CD14-positive monocyte (primary cell): ENCODE measurements at regions of chr15 and their contacts with region 1.

Region 1: DNA sequence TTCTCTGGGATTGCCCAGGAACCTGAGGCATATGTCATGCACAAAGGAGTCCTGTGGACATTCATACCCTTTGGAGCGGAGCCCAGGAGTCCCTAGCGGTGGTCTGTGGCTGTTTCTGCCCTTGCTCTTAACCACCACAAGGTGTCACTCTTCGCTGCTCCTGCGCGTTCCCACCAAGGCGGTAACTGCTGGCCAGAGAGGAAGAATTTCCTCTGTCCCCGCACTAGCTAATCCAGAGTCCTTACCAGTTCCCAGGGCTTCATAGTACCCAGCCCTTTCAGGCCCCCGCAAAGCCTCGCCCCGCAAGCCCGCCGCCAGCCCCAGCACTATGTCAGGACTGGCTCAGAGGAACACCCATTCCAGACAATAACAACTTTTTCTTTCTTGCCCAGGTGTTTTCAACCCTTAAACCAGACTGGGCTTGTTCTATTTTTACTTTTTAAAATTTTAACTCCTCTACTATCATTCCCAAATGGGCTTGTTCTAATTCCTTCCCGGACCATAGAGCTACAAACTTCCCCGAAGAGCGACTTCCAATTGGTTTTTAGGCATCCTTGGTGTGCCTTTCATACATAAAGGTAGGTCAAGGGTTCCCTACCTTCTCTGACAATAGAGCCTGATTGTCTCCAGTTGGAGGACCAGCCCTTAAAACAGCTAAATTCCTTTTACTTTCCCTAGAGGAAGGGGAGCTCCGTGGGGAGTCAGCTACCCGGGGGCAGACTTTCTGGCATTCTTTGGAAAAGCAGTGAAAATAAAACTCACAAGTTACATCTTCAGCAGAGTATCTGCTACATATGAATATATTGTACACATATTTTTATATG is 31.8 kb upstream of the ZNF774 start:
- DNase-seq: peak; percentile 76 to 84 (median 84)
- H3K4me3 ChIP-seq: peak overlapping the region in 1 of 3 experiments; percentile 30
- H3K4me3 Mint-ChIP-seq: peak overlapping the region; percentile 35
- H3K27ac ChIP-seq: no peak overlapping the region
- H3K27ac Mint-ChIP-seq: peak overlapping the region in 2 of 7 donors; percentile 23 to 63
- H3K4me1 ChIP-seq: peaks cover 7% of the 10 kb centered on the region in 2 donors
- H3K4me1 Mint-ChIP-seq: peaks cover 10% of the 10 kb centered on the region
- H3K27me3 ChIP-seq: no peaks in the 10 kb centered on the region
- H3K27me3 Mint-ChIP-seq: peaks cover 0 to 3% (median 3%) of the 10 kb centered on the region in 3 donors
- CTCF ChIP-seq: peak; percentile 91

Region 2: GRCh38 chr15:90419738-90420406 is 99.6 kb after region 1 on chr15:
- intact Hi-C with region 1: loop called in 1 of 2 experiments (anchors 10 kb)
- DNase-seq: no peak
- H3K4me3 ChIP-seq: no peak overlapping the region
- H3K4me3 Mint-ChIP-seq: no peak overlapping the region
- H3K27ac ChIP-seq: peak overlapping the region in 1 of 2 donors; percentile 45
- H3K27ac Mint-ChIP-seq: peak overlapping the region in 5 of 7 donors; percentile 47 to 91 (median 56)
- H3K4me1 ChIP-seq: peaks cover 29 to 43% of the 10 kb centered on the region in 2 donors
- H3K4me1 Mint-ChIP-seq: peaks cover 56% of the 10 kb centered on the region
- H3K27me3 ChIP-seq: no peaks in the 10 kb centered on the region
- H3K27me3 Mint-ChIP-seq: peaks cover 0 to 2% (median 0%) of the 10 kb centered on the region in 3 donors
- CTCF ChIP-seq: no peak

Region 3: GRCh38 chr15:90482124-90483011 is 162.1 kb after region 1 on chr15:
- intact Hi-C with region 1: loop called (anchors 2 to 10 kb)
- DNase-seq: peak; percentile 4 to 28 (median 22)
- H3K4me3 ChIP-seq: no peak overlapping the region
- H3K4me3 Mint-ChIP-seq: no peak overlapping the region
- H3K27ac ChIP-seq: peak overlapping the region in 1 of 2 donors; percentile 22
- H3K27ac Mint-ChIP-seq: peak overlapping the region in 3 of 7 donors; percentile 50 to 78 (median 72)
- H3K4me1 ChIP-seq: no peaks in the 10 kb centered on the region
- H3K4me1 Mint-ChIP-seq: no peaks in the 10 kb centered on the region
- H3K27me3 ChIP-seq: no peaks in the 10 kb centered on the region
- H3K27me3 Mint-ChIP-seq: peaks cover 0 to 2% (median 0%) of the 10 kb centered on the region in 3 donors
- CTCF ChIP-seq: peak; percentile 73